Common myeloid progenitor, CD34-positive (primary cell): ENCODE measurements at regions of chr14 and their contacts with region 1.

Region 1: DNA sequence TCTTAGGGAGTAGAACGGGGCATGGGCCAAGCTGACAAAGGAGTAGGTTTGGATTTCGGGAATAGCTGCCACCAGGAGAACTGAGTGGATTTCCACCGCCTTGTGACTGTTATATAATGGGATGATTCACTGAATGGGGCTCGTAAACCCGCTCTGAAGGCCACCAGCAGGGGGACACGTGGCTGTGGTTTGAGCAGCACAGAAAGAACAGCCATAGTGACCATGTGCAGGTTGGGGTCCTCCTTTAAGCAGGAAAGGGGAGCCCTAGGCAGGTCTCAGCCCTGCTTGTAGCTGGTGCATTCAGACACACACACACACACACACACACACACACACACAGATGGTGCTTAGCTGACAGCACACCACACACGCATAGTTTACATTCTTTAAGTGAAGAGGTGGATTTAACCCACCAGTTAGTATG is 8.6 kb upstream of the ASB2 start:
- DNase-seq: peak in 2 of 3 donors; percentile 45
- H3K4me3 ChIP-seq: no peak overlapping the region
- H3K27ac ChIP-seq: no peak overlapping the region
- H3K4me1 ChIP-seq: peaks cover 0 to 3% (median 0%) of the 10 kb centered on the region in 4 experiments
- H3K27me3 ChIP-seq: peaks cover 0 to 9% (median 0%) of the 10 kb centered on the region in 5 experiments

Region 2: DNA sequence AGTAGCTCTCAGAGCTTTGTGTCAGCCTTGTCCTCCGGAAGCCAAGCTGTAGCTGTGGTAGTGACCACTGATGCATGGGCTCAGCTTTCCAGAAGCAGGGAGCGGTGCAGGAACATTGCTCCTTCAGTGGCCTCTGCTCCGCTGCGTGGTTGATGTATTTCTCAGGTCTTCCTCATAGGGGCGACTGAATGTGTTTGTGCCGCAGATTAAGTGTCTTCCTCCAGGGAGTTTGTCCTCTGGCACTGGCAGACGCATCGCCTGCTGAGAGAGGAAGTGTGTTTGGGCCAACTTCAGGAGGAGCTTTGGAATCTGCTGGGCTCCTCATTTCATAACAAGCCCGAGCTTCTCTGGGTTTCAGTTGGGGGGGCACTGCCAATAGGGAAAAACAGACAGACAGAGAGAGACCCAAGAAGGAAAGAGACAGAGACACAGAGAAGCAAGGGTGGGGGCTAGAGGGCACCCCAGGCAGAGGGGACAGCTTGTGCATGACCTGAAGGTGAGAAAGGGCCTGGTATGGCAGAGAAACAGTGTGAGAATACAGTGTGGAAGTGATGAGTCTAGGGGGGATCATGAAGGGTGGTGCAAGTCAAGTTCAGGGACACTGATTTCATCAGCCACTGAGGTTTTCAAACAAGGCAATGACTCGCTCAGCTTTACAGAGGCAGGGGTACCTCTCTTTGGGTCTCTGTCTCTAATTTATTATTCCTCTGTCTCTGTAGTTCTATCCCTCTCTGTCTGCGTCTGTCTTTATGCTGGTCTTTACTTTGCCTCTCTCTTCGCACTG is 127.3 kb before region 1 on chr14:
- CTCF ChIA-PET with region 1: no interaction called
- POLR2A ChIA-PET with region 1: no interaction called
- DNase-seq: no peak
- H3K4me3 ChIP-seq: no peak overlapping the region
- H3K27ac ChIP-seq: no peak overlapping the region
- H3K4me1 ChIP-seq: no peaks in the 10 kb centered on the region
- H3K27me3 ChIP-seq: peaks cover 0 to 16% (median 5%) of the 10 kb centered on the region in 5 experiments

Region 3: DNA sequence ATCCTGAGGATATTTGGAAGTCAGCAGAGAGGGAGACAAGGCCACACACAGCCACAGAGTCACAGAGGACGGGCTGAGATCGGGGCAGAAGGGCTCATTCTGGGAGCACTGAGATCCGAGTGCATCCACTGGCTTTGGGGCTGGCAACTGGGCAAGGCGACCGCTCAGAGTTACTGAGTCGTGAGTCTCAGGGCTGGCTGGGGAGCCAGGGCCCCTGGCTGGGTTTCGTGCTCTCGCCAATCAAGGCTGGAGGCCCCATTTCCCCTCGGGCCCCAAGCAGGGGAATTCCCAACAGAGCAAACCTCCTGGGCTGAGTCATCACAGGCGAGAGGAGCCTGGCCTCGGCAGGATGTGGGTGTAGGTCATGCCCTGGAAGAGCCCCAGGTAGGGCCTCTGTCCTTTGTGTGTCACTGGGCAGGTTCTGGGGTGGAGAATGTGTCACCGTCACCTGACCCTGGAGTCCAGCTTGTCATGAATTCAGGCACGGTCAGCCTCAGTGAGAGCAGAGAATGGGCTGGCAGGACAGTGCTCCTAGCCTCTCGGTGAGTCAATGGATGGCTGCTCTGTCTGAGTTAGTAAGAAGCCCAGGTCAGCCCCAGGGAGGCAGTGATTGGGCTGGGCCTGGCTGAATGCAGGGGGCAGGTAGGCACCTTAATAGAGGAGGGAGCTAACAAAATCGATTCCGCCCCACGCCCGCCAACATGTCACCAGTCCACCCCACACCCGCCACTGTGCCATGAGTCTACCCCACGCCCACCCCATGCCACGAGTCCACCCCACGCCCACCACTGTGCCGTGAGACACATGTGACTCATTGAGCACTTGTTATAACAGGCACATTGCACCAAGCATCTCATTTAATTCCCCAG is 25.5 kb before region 1 on chr14:
- CTCF ChIA-PET with region 1: no interaction called
- POLR2A ChIA-PET with region 1: no interaction called
- DNase-seq: peak; percentile 91 to 98 (median 98)
- H3K4me3 ChIP-seq: peak overlapping the region in 2 of 7 experiments; percentile 50 to 56
- H3K27ac ChIP-seq: peak overlapping the region in 1 of 2 experiments; percentile 77
- H3K4me1 ChIP-seq: peaks cover 10 to 81% (median 74%) of the 10 kb centered on the region in 4 experiments
- H3K27me3 ChIP-seq: no peaks in the 10 kb centered on the region

Region 4: GRCh38 chr14:93970549-93970946 is 14.5 kb before region 1 on chr14:
- CTCF ChIA-PET with region 1: interaction called, 11 read pairs
- POLR2A ChIA-PET with region 1: no interaction called
- DNase-seq: peak; percentile 48 to 72 (median 71)
- H3K4me3 ChIP-seq: peak overlapping the region; percentile 44 to 86 (median 67)
- H3K27ac ChIP-seq: peak overlapping the region in 1 of 2 experiments; percentile 27
- H3K4me1 ChIP-seq: peaks cover 5 to 43% (median 34%) of the 10 kb centered on the region in 4 experiments
- H3K27me3 ChIP-seq: peaks cover 0 to 2% (median 0%) of the 10 kb centered on the region in 5 experiments

Region 5: GRCh38 chr14:94066089-94066676 is 81.2 kb after region 1 on chr14:
- CTCF ChIA-PET with region 1: no interaction called
- POLR2A ChIA-PET with region 1: no interaction called
- DNase-seq: no peak
- H3K4me3 ChIP-seq: no peak overlapping the region
- H3K27ac ChIP-seq: no peak overlapping the region
- H3K4me1 ChIP-seq: no peaks in the 10 kb centered on the region
- H3K27me3 ChIP-seq: no peaks in the 10 kb centered on the region